ENCODE measurements at regions of chr5 and their contacts with region 1.

Region 1: DNA sequence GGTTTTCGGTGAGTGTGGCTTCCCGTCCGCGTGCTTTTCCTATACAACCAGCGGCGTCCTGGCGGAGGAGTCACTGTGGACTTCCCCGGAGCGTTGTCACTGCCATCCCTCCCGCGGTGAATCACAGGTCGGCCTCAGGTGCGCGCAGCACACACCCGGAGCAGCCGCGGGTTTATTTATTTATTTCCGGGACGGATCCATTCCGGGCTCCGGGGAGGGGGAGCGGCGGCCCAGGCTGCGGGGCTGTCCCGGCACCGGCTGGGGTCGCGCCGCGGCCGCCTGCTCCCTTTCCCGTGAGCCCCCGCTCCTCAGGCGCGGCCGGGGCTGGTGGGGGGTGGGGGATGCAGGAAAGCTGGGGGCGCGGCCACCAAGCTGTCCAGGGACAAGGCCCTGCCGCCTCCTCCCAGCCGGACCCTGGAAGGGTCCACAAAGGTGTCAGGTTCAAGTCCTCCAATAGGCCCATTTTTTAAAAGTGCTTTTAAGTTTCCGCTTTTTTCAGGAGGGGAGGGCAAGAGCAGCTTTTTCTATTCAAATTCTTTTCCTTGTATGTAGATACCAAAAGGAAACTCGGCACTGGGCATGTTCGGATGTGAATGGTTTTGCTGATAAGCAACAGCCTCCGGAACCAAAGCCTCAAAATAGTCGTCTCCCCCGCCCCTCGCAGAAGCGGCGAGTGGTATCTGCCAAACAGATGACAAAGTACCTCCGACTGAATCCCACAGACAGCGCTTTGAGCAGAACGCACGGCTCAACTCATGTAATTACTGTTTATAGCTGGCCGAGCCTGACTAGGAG is 192.5 kb downstream of the CD180 start:
- DNase-seq: peak; percentile 96
- H3K4me3 Mint-ChIP-seq: peak overlapping the region; percentile 94
- H3K27ac Mint-ChIP-seq: peak overlapping the region; percentile 97
- H3K4me1 Mint-ChIP-seq: peaks cover 58% of the 10 kb centered on the region
- H3K27me3 Mint-ChIP-seq: no peaks in the 10 kb centered on the region

Region 2: DNA sequence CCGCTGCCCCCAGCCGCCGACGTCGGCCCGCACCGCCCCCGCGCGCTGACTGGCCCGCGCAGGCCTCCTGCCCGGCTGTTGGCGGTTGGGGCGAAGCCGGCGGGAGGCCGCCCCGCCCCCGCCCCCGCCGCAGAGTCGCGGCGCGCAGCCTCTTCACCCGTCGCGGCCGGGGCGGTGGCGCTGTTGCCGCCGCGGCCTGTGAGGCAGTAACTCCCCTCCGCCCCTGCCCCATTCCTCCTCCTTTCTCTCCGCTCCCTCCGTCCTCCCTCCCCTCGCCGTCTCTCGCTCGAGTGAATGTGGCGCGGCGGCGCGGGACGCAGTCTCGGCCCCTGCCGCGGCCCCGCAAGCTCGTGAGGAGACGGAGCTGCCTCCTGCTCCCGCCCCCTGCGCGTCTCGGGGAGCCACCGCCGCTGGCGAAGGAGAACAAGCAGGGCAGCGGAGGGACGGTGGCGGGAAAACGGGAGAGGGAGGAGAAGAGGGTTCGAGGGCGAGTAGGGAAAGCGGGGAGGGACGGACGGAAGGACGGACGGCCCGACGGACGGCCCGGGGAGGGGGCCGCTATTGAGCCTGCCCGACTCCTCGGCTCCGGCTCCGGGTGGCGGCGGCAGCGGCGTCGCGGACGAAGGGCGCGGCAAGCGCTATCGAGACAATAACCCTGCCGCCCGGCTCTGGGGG is 1078.4 kb before region 1 on chr5:
- CTCF ChIA-PET with region 1: no interaction called
- intact Hi-C with region 1: loop called (anchors 2 kb)
- DNase-seq: peak; percentile 77
- H3K4me3 Mint-ChIP-seq: peak overlapping the region; percentile 82
- H3K27ac Mint-ChIP-seq: peak overlapping the region; percentile 92
- H3K4me1 Mint-ChIP-seq: peaks cover 26% of the 10 kb centered on the region
- H3K27me3 Mint-ChIP-seq: no peaks in the 10 kb centered on the region

Region 3: GRCh38 chr5:66828548-66829357 is 175.4 kb before region 1 on chr5:
- CTCF ChIA-PET with region 1: no interaction called
- intact Hi-C with region 1: loop called (anchors 1 kb)
- DNase-seq: peak; percentile 84
- H3K4me3 Mint-ChIP-seq: peak overlapping the region; percentile 87
- H3K27ac Mint-ChIP-seq: peak overlapping the region; percentile 84
- H3K4me1 Mint-ChIP-seq: peaks cover 24% of the 10 kb centered on the region
- H3K27me3 Mint-ChIP-seq: peaks cover 29% of the 10 kb centered on the region

Region 4: DNA sequence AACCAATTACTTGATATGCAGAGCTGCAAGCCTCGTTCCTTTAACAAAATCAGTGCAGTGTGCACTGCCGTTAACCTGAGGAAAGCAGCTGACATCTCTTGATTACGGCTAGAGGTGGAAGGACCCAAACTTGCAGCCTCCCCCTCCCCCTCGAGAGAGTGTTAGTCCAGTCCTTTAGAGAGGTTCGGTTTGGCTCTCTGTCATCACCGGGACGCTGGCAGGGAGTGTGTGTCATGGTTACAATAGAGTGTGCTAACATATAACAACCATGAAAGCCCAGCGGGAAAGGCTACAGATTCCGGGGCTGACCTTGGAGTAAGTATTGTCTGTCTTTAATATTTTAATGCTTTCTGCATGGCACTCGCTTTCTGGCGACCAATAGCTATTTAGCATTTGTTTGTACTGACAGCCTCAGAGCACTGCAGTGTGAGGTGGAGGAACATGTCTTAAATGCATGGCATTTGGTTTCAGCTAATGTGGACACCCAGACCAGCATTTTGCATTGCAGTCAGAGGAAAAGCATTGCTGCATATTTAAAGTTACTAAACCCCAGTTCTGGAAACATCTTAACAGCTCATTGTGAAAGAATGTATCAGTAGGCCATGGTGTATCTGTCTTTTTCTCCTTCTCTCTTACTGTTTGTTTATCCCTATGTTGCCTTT is 45.0 kb before region 1 on chr5:
- CTCF ChIA-PET with region 1: no interaction called
- intact Hi-C with region 1: no loop called
- DNase-seq: no peak
- H3K4me3 Mint-ChIP-seq: no peak overlapping the region
- H3K27ac Mint-ChIP-seq: no peak overlapping the region
- H3K4me1 Mint-ChIP-seq: no peaks in the 10 kb centered on the region
- H3K27me3 Mint-ChIP-seq: peaks cover 3% of the 10 kb centered on the region

Region 5: GRCh38 chr5:67021521-67021920 is 17.4 kb after region 1 on chr5:
- CTCF ChIA-PET with region 1: no interaction called
- intact Hi-C with region 1: loop called (anchors 2 kb)
- DNase-seq: no peak
- H3K4me3 Mint-ChIP-seq: no peak overlapping the region
- H3K27ac Mint-ChIP-seq: no peak overlapping the region
- H3K4me1 Mint-ChIP-seq: peaks cover 45% of the 10 kb centered on the region
- H3K27me3 Mint-ChIP-seq: no peaks in the 10 kb centered on the region

Region 6: DNA sequence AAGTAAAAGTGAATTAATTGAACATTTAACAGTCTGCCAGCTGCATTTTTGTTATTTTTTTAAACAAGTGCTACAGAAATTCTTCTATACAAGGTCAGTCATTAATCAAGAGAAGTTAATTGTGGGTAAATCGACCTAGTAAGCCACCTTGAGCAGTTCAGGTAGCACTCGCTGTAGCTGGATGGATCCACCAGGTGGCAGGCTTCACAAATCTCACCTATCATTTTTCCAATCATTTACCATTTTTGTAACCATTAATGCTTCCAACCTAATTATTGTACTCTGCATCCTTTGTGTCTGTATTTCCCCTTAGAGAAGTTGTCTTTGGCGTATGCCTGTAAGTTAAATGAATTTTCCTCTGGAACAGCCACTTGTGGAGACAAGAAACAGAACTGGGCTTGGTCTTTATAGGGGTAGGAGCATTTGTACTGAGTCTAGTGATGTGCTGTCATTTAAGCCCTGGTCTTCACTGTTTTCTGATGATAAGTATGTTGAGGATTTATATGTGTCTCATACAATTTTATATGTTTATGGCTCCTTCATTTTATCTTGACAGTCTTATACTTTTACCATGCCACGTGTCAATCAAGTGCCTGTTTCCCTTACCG is 152.9 kb after region 1 on chr5:
- CTCF ChIA-PET with region 1: no interaction called
- intact Hi-C with region 1: loop called (anchors 1 kb)
- DNase-seq: peak; percentile 70
- H3K4me3 Mint-ChIP-seq: no peak overlapping the region
- H3K27ac Mint-ChIP-seq: no peak overlapping the region
- H3K4me1 Mint-ChIP-seq: peaks cover 35% of the 10 kb centered on the region
- H3K27me3 Mint-ChIP-seq: no peaks in the 10 kb centered on the region

Region 7: GRCh38 chr5:68272289-68272688 is 1268.2 kb after region 1 on chr5:
- CTCF ChIA-PET with region 1: no interaction called
- intact Hi-C with region 1: loop called (anchors 5 kb)
- DNase-seq: no peak
- H3K4me3 Mint-ChIP-seq: no peak overlapping the region
- H3K27ac Mint-ChIP-seq: peak overlapping the region; percentile 36
- H3K4me1 Mint-ChIP-seq: peaks cover 82% of the 10 kb centered on the region
- H3K27me3 Mint-ChIP-seq: no peaks in the 10 kb centered on the region

Measured in activated naive CD4-positive, alpha-beta T cell treated with anti-CD3 and anti-CD28 coated beads for 36 hours (primary cell).